Caco-2 (cell line): ENCODE measurements at regions of chr12 and their contacts with region 1.

Region 1: GRCh38 chr12:108260969-108261368 is 78.1 kb downstream of the CMKLR1 start:
- DNase-seq: no peak
- H3K4me3 ChIP-seq: no peak overlapping the region
- H3K4me3 Mint-ChIP-seq: no peak overlapping the region
- H3K27ac Mint-ChIP-seq: no peak overlapping the region
- H3K4me1 ChIP-seq: no peaks in the 10 kb centered on the region
- H3K4me1 Mint-ChIP-seq: no peaks in the 10 kb centered on the region
- H3K27me3 ChIP-seq: no peaks in the 10 kb centered on the region
- H3K27me3 Mint-ChIP-seq: peaks cover 18% of the 10 kb centered on the region
- CTCF ChIP-seq: no peak

Region 2: GRCh38 chr12:106329231-106329982 is 1931.6 kb before region 1 on chr12:
- CTCF ChIA-PET with region 1: interaction called, 10 read pairs
- POLR2A ChIA-PET with region 1: no interaction called
- intact Hi-C with region 1: no loop called
- DNase-seq: no peak
- H3K4me3 ChIP-seq: no peak overlapping the region
- H3K4me3 Mint-ChIP-seq: no peak overlapping the region
- H3K27ac Mint-ChIP-seq: no peak overlapping the region
- H3K4me1 ChIP-seq: no peaks in the 10 kb centered on the region
- H3K4me1 Mint-ChIP-seq: no peaks in the 10 kb centered on the region
- H3K27me3 ChIP-seq: no peaks in the 10 kb centered on the region
- H3K27me3 Mint-ChIP-seq: no peaks in the 10 kb centered on the region
- CTCF ChIP-seq: no peak

Region 3: DNA sequence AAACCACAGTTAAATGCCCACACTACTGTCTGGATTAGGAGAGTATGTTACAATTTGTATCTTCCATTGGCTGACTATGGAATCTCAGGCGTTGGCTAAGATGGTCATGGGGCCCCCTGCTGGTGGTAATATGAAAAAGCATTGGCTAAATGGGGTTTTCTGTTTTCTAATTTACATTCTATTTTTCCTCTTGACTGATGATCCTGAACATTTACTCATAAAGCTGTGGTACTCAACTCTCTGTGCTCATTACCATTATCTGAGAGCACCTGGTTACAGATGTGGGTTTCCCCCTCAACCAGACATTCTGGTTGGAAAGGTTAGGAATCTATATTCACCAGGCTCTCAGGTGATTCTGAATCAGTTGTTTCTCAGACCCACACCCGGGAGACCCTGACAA is 67.1 kb before region 1 on chr12:
- CTCF ChIA-PET with region 1: no interaction called
- POLR2A ChIA-PET with region 1: no interaction called
- intact Hi-C with region 1: no loop called
- DNase-seq: peak in 1 of 2 experiments; percentile 43
- H3K4me3 ChIP-seq: no peak overlapping the region
- H3K4me3 Mint-ChIP-seq: no peak overlapping the region
- H3K27ac Mint-ChIP-seq: no peak overlapping the region
- H3K4me1 ChIP-seq: no peaks in the 10 kb centered on the region
- H3K4me1 Mint-ChIP-seq: no peaks in the 10 kb centered on the region
- H3K27me3 ChIP-seq: no peaks in the 10 kb centered on the region
- H3K27me3 Mint-ChIP-seq: peaks cover 13% of the 10 kb centered on the region
- CTCF ChIP-seq: peak; percentile 51 to 78